HepG2 (cell line): ENCODE measurements at regions of chr14 and their contacts with region 1.

Region 1: DNA sequence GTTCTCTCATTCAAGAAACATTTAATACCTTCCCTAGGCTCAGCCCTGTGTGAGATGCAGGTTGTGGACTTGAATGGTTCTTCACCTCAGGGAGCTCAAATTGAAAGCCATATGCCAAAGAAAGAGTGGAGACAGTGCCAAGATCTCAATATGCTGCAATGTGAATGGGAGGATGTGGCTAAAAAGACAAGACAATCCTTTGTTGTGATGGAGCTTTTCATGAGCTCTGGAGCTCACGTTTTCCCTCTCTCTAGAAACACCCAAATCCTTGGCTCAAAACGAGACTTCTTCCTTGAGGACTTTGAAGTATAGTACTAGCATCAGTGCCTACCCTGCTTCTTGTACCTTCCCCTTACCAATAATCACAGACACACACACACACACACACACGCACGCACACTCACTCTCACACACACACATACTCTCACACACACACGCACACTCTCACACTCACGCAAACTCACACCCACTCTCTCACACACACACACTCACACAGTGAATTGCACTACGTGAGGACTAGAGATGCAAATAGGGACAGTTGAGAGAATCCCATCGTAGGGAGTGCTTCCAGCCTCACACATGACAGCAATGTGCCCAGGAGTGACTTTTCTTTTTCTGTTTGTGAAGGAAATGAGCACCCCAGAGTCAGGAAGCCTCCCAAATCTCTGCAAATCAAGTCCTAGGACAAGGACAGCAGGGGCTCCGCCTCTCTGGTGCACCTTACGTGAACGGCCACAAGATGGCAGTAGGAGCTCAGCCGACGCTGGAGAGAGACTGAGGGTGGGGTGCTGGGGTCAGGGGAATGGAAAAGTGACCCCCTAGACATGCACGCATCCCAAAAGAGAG is 231.4 kb downstream of the PCNX1 start:
- DNase-seq: peak; percentile 31
- ATAC-seq: peak; percentile 84
- H3K4me3 ChIP-seq: peak overlapping the region in 1 of 3 experiments; percentile 28; a peak in 1 of 6 replicates
- H3K27ac ChIP-seq: no peak overlapping the region
- H3K4me1 ChIP-seq: peaks cover 44% of the 10 kb centered on the region
- H3K27me3 ChIP-seq: no peaks in the 10 kb centered on the region
- CTCF ChIP-seq: peak; percentile 96
- EP300 ChIP-seq: no peak
- POLR2A ChIP-seq: no peak
- RAD21 ChIP-seq: peak; percentile 92

Region 2: DNA sequence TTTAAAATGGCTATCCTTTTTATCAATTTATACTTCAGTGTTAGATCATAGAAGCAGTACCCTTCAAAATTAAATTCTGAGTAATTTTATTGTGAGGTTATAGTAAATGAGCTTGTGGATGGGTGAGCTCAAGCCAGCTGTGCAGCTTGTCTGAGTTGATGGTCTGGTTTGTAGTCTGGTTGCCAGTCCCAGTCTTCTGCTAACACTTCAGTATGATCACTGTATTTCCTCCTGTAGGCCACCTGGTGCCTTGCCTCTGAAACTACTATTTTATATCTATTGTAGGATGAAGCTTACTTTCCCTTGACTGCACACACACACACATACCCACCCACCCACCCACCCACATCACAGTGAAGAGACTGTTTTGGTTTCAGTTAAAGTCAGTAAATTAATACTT is 265.0 kb after region 1 on chr14:
- CTCF ChIA-PET with region 1: no interaction called
- POLR2A ChIA-PET with region 1: no interaction called
- in situ Hi-C with region 1: loop called (anchors 10 kb)
- intact Hi-C with region 1: loop called (anchors 2 kb)
- DNase-seq: peak; percentile 39
- ATAC-seq: peak; percentile 92
- H3K4me3 ChIP-seq: no peak overlapping the region
- H3K27ac ChIP-seq: no peak overlapping the region
- H3K4me1 ChIP-seq: peaks cover 5% of the 10 kb centered on the region; the same call in 1 of the 2 replicates
- H3K27me3 ChIP-seq: no peaks in the 10 kb centered on the region
- CTCF ChIP-seq: peak; percentile 36
- EP300 ChIP-seq: no peak
- POLR2A ChIP-seq: no peak
- RAD21 ChIP-seq: no peak

Region 3: GRCh38 chr14:71753126-71753830 is 614.6 kb after region 1 on chr14:
- CTCF ChIA-PET with region 1: interaction called, 24 read pairs
- POLR2A ChIA-PET with region 1: no interaction called
- in situ Hi-C with region 1: loop called (anchors 5 kb)
- intact Hi-C with region 1: no loop called
- DNase-seq: peak; percentile 62
- ATAC-seq: peak; percentile 89
- H3K4me3 ChIP-seq: no peak overlapping the region
- H3K27ac ChIP-seq: no peak overlapping the region
- H3K4me1 ChIP-seq: no peaks in the 10 kb centered on the region; the same call in 1 of the 2 replicates
- H3K27me3 ChIP-seq: peaks cover 0 to 5% of the 10 kb centered on the region in 2 experiments; a peak in 1 of 5 replicates
- CTCF ChIP-seq: peak; percentile 93
- EP300 ChIP-seq: no peak
- POLR2A ChIP-seq: no peak
- RAD21 ChIP-seq: peak; percentile 96

Region 4: GRCh38 chr14:71855399-71856036 is 716.8 kb after region 1 on chr14:
- CTCF ChIA-PET with region 1: no interaction called
- POLR2A ChIA-PET with region 1: no interaction called
- in situ Hi-C with region 1: no loop called
- intact Hi-C with region 1: loop called (anchors 10 kb)
- DNase-seq: peak; percentile 49
- ATAC-seq: peak; percentile 91
- H3K4me3 ChIP-seq: no peak overlapping the region
- H3K27ac ChIP-seq: no peak overlapping the region
- H3K4me1 ChIP-seq: no peaks in the 10 kb centered on the region
- H3K27me3 ChIP-seq: no peaks in the 10 kb centered on the region
- CTCF ChIP-seq: peak; percentile 71
- EP300 ChIP-seq: no peak
- POLR2A ChIP-seq: no peak
- RAD21 ChIP-seq: no peak